ENCODE measurements at regions of chr10 and their contacts with region 1.

Region 1: DNA sequence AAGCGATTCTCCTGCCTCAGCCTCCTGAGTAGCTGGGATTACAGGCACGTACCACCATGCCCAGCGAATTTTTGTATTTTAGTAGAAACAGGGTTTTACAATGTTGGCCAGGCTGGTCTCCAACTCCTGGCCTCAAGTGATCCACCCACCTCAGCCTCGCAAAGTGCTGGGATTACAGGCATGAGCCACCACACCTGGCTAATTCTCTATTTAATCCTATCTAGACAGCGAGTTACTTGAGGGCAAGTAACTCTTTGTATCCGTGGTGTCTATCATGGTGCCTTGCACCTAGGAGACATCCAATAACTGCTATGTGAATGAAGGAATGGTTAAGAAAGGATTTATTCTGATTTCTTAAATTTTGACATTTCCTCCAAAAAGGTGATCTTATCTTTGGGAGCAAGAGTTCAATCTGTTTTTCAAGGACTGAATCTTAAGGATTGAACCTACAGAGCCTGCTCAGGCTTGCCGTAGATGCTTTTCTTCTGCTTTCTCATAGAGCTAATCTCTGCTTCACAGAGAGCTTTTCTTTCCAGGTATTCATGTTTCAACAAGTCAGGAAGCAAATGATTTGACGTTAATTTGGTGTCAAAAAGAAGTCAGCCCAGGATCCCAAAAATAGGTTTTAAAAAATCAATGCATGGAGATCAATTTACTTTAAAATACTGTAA is 101.6 kb downstream of the CUL2 start:
- DNase-seq: no peak
- ATAC-seq: no peak
- H3K4me3 ChIP-seq: no peak overlapping the region
- H3K27ac ChIP-seq: no peak overlapping the region
- H3K4me1 ChIP-seq: no peaks in the 10 kb centered on the region
- H3K27me3 ChIP-seq: no peaks in the 10 kb centered on the region
- CTCF ChIP-seq: no peak

Region 2: GRCh38 chr10:34967335-34967880 is 21.1 kb before region 1 on chr10:
- CTCF ChIA-PET with region 1: interaction called, 10 read pairs
- POLR2A ChIA-PET with region 1: no interaction called
- in situ Hi-C with region 1: no loop called
- intact Hi-C with region 1: no loop called
- DNase-seq: no peak
- ATAC-seq: no peak
- H3K4me3 ChIP-seq: no peak overlapping the region
- H3K27ac ChIP-seq: no peak overlapping the region
- H3K4me1 ChIP-seq: no peaks in the 10 kb centered on the region
- H3K27me3 ChIP-seq: no peaks in the 10 kb centered on the region
- CTCF ChIP-seq: no peak

Region 3: DNA sequence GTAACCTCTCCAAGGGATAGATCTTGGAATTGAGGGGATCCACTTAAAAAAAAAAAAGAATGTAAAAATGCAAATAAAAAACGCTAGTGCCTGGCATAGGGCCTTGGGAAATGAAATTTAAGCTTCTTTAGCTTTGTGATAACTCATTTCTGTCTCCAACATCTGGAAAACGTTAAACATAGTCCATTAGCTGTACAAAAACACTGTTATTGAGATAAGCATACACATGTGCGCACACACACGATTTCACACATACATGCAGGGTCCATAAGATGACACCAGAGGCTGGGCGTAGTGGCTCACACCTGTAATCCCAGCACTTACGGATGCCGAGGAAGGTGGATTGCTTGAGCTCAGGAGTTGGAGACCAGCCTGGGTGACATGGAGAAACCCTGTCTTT is 115.3 kb after region 1 on chr10:
- CTCF ChIA-PET with region 1: no interaction called
- POLR2A ChIA-PET with region 1: no interaction called
- in situ Hi-C with region 1: no loop called
- intact Hi-C with region 1: no loop called
- DNase-seq: no peak
- ATAC-seq: no peak
- H3K4me3 ChIP-seq: no peak overlapping the region
- H3K27ac ChIP-seq: no peak overlapping the region
- H3K4me1 ChIP-seq: no peaks in the 10 kb centered on the region
- H3K27me3 ChIP-seq: no peaks in the 10 kb centered on the region
- CTCF ChIP-seq: no peak

Region 4: DNA sequence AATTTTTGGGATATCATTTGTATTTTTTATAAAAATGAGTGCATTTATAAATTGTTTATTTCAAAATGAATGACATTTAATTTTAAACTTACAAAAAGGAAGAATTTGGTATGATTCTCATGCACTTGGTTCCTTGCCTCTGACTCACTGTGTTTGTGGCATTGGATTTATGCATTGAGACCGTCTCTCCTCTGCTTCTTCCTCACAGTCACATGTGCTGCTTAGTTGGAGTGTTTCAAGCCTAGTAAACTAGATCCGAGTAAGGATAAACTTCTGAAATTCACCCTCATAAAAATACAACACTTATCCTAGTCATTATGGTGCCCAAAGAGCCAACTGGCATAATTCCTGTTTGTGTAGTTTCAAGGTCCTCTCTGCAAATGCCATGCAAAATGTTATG is 672.7 kb after region 1 on chr10:
- CTCF ChIA-PET with region 1: no interaction called
- POLR2A ChIA-PET with region 1: no interaction called
- in situ Hi-C with region 1: no loop called
- intact Hi-C with region 1: no loop called
- DNase-seq: no peak
- ATAC-seq: no peak
- H3K4me3 ChIP-seq: no peak overlapping the region
- H3K27ac ChIP-seq: no peak overlapping the region
- H3K4me1 ChIP-seq: no peaks in the 10 kb centered on the region
- H3K27me3 ChIP-seq: 0 out of 2 replicates have a peak, but pooled peaks cover 2% of the 10 kb centered on the region
- CTCF ChIP-seq: no peak

Measured in Panc1 (cell line).